Ascending aorta (tissue), 2 donors: ENCODE measurements at regions of chrX and their contacts with region 1.

Region 1: GRCh38 chrX:111244235-111244750 is 26.0 kb downstream of the CAPN6 start:
- DNase-seq: no peak
- H3K4me3 ChIP-seq: no peak overlapping the region
- H3K27ac ChIP-seq: no peak overlapping the region
- H3K4me1 ChIP-seq: no peaks in the 10 kb centered on the region
- H3K27me3 ChIP-seq: no peaks in the 10 kb centered on the region
- CTCF ChIP-seq: peak; percentile 27 to 62 (median 42)

Region 2: DNA sequence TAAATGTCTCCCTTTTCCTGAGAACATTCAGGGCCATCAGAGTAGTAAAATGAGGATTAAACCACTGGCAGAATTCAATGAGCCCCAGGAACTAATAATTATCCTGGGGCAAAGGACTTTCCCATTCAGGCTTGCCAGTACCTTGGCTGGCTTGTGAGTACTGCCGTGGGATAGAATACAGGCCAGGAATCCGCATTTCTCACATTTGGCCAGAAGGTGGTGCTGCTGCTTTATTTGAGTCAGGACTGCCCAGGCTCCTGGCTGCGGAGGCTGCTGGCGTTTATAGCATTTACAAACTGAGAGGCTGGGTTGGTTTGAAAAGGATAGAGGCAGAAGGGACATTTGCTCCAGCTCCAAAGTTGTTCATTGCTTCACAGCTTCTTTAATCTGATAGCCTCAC is 794.2 kb before region 1 on chrX:
- intact Hi-C with region 1: loop called (anchors 10 kb)
- DNase-seq: peak in 1 of 2 donors; percentile 86
- H3K4me3 ChIP-seq: no peak overlapping the region
- H3K27ac ChIP-seq: no peak overlapping the region
- H3K4me1 ChIP-seq: no peaks in the 10 kb centered on the region
- H3K27me3 ChIP-seq: no peaks in the 10 kb centered on the region
- CTCF ChIP-seq: peak; percentile 41 to 76 (median 63)

Region 3: DNA sequence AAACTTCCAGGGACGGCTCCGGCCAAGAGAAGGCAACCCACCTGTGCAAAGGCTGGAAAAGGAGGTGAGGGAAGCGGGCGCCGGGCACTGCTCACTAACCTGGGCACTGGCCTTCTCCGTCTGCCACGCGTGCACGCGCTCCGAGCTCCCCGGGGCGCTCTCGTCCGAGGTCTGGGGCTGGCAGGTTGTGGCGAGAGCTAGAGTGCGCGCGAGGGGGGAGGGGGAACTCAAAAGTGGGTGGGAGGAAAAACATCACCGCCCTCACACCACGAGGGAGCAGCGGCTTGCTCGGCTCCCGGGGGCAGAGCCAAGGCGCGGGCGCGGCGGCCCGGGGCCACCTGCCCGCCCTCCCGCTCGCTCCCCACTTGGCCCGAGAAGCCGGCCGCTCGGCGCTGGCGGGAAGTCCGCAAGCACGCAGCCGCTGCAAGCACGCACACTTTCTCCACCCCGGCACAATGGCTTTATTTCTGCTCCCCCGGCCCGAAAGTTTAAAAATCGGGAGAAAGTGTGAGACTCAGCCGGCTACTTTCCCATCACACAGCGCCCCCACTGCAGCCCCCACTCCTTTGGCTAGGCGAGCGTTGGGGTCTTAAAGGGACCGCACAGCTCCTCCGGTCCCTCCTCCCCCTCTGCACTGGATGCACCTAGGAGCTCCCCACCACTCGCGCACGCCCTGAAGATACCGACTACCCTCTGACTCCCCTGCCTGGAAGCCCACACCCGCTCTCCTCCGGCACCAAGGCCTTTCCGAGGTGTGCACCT is 448.5 kb before region 1 on chrX and contains the start of gene CHRDL1:
- intact Hi-C with region 1: no loop called
- DNase-seq: no peak
- H3K4me3 ChIP-seq: peak within 1 kb of the TSS; percentile 30 to 52
- H3K27ac ChIP-seq: no peak within 1 kb of the TSS
- H3K4me1 ChIP-seq: no peaks in the 10 kb centered on the region
- H3K27me3 ChIP-seq: no peaks in the 10 kb centered on the region
- CTCF ChIP-seq: no peak
- total RNA-seq, gene CHRDL1: 43.5 TPM

Region 4: DNA sequence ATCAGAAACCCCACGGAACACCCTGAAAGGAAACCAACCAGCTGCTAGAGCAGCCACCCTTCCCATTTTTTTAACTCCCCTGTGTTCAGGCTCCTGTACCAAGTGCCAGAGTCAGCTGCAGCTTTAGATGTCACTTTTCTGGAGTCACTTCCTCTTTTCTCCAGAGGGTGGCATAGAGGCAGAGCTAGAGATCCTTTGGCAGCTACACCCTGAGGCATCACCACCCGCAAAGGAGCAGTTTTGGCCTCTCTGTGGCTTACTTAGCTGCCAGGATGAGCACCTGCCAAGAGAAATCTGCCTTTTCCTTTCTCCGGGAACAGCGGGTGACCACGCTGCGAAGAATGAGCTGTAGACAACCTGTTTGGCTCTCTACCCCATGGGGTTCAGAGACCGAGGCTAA is 390.7 kb before region 1 on chrX:
- intact Hi-C with region 1: loop called (anchors 10 kb)
- DNase-seq: no peak
- H3K4me3 ChIP-seq: no peak overlapping the region
- H3K27ac ChIP-seq: no peak overlapping the region
- H3K4me1 ChIP-seq: no peaks in the 10 kb centered on the region
- H3K27me3 ChIP-seq: no peaks in the 10 kb centered on the region
- CTCF ChIP-seq: peak in 2 of 3 experiments; percentile 5 to 25

Region 5: GRCh38 chrX:111006116-111006515 is 238.2 kb before region 1 on chrX:
- intact Hi-C with region 1: no loop called
- DNase-seq: no peak
- H3K4me3 ChIP-seq: no peak overlapping the region
- H3K27ac ChIP-seq: no peak overlapping the region
- H3K4me1 ChIP-seq: no peaks in the 10 kb centered on the region
- H3K27me3 ChIP-seq: no peaks in the 10 kb centered on the region
- CTCF ChIP-seq: no peak

Region 6: DNA sequence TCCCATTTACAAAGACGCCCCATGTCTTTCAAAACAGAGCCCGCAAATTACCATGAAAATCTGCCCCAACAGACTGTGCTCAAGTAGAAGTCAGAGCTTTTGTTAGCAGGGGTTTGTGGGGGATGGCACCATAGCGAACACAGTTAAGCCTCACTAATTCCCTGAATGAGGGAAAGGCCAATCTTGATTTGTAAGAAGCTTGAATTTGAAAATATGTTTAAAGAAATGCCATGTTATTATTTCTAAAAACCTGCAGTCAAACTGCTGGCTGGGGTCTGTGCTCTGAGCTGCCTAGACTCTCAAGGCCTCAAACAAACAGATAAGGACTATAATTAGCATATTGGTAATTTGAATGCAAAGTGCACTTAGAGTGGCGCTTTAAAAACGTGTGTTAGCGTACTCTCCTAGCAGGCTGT is 157.7 kb before region 1 on chrX:
- intact Hi-C with region 1: no loop called
- DNase-seq: no peak
- H3K4me3 ChIP-seq: no peak overlapping the region
- H3K27ac ChIP-seq: no peak overlapping the region
- H3K4me1 ChIP-seq: no peaks in the 10 kb centered on the region
- H3K27me3 ChIP-seq: no peaks in the 10 kb centered on the region
- CTCF ChIP-seq: no peak

Region 7: DNA sequence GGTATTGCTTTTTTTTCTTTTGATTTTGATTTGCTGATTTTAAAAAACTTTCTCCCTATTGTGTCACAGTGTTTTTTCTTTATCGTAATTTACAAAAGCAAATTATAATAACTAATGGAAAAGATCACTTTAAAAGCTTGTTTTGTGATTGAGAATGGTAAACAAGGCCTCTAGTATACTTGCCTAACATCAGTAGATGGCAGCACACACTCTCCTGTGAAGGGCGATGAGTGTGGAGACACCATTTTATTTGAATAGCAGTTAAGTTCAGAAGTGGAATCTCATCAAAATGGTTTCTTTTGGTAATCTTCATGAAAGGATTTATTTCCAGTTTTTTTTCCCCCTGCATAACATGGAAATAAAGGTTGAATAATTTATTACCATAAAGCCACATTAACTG is 76.0 kb before region 1 on chrX:
- intact Hi-C with region 1: loop called (anchors 10 kb)
- DNase-seq: no peak
- H3K4me3 ChIP-seq: no peak overlapping the region
- H3K27ac ChIP-seq: no peak overlapping the region
- H3K4me1 ChIP-seq: no peaks in the 10 kb centered on the region
- H3K27me3 ChIP-seq: no peaks in the 10 kb centered on the region
- CTCF ChIP-seq: peak in 1 of 3 experiments; percentile 10